ENCODE measurements at regions of chr2 and their contacts with region 1.

Region 1: DNA sequence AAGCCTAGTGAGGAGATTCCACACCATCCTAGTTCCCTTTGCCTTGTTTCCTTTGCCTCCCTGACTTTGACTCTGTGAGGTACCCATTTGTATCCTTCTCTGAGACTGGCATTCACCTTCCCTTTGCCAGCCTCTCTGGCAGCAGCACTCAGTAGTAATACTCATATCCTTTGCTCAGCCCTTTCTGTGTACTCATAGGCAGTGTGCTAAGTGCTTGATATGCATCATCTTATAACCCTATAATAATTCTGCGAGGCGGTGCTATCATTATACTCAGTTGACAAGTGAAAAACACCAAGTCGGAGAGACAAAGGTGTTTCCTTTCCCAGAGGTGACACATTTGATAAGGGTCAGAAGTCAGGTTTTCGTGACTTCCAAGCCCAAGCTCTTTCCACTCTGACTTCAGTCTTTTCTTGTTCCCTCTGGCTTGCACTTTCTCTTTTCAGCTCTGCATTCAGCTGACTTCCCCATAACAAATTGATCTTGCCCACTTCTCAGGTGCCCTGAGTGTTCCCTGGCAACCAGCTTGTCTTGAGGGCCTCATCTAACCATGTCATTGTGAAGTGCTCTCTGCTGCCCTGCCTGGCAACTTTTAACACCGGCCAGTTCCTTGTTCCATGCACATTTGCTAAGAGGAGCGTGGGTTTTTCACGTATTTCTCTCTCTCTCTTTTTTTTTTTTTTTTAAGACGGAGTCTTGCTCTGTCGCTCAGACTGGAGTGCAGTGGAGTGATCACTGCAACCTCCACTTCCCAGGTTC is 94.5 kb upstream of the UPP2 start:
- DNase-seq: peak; percentile 73
- ATAC-seq: peak; percentile 91
- H3K4me3 ChIP-seq: no peak overlapping the region
- H3K27ac ChIP-seq: no peak overlapping the region
- H3K4me1 ChIP-seq: peaks cover 7% of the 10 kb centered on the region
- H3K27me3 ChIP-seq: no peaks in the 10 kb centered on the region
- CTCF ChIP-seq: peak; percentile 25

Region 2: DNA sequence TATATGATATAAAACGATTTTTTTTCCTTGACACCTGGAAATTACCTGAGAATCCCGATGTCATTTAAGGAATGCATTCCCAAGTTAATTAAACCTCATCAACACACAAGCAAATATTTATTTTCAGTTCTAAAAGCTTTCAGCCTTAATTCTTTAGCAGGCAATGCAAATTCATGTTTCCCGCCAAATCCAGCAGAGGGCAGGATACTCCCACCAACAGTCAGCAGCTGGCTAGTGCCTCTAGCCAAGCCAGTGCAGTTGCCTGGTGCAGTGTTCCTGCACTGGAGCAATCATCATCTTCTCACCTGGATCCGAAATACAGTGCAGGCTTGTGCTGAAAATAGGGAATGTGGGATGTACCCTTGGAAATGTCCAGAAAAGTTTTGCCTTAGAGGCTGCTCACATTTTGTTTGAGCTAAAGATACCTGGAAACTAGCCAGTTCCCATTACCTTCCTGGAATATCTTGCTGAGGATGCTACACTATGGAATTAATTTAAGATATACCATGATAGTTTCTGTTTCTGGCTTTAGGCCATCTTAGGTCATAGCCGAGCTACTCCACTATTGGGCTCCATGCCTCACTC is 514.9 kb before region 1 on chr2:
- intact Hi-C with region 1: loop called (anchors 10 kb)
- DNase-seq: peak; percentile 67
- ATAC-seq: peak; percentile 91
- H3K4me3 ChIP-seq: no peak overlapping the region
- H3K27ac ChIP-seq: no peak overlapping the region
- H3K4me1 ChIP-seq: peaks cover 6% of the 10 kb centered on the region
- H3K27me3 ChIP-seq: no peaks in the 10 kb centered on the region
- CTCF ChIP-seq: peak; percentile 67

Region 3: GRCh38 chr2:157784169-157784822 is 222.8 kb before region 1 on chr2:
- intact Hi-C with region 1: loop called (anchors 5 kb)
- DNase-seq: peak; percentile 66
- ATAC-seq: peak; percentile 81
- H3K4me3 ChIP-seq: no peak overlapping the region
- H3K27ac ChIP-seq: no peak overlapping the region
- H3K4me1 ChIP-seq: peaks cover 47% of the 10 kb centered on the region
- H3K27me3 ChIP-seq: no peaks in the 10 kb centered on the region
- CTCF ChIP-seq: no peak